ENCODE measurements at regions of chrX and their contacts with region 1.

Region 1: DNA sequence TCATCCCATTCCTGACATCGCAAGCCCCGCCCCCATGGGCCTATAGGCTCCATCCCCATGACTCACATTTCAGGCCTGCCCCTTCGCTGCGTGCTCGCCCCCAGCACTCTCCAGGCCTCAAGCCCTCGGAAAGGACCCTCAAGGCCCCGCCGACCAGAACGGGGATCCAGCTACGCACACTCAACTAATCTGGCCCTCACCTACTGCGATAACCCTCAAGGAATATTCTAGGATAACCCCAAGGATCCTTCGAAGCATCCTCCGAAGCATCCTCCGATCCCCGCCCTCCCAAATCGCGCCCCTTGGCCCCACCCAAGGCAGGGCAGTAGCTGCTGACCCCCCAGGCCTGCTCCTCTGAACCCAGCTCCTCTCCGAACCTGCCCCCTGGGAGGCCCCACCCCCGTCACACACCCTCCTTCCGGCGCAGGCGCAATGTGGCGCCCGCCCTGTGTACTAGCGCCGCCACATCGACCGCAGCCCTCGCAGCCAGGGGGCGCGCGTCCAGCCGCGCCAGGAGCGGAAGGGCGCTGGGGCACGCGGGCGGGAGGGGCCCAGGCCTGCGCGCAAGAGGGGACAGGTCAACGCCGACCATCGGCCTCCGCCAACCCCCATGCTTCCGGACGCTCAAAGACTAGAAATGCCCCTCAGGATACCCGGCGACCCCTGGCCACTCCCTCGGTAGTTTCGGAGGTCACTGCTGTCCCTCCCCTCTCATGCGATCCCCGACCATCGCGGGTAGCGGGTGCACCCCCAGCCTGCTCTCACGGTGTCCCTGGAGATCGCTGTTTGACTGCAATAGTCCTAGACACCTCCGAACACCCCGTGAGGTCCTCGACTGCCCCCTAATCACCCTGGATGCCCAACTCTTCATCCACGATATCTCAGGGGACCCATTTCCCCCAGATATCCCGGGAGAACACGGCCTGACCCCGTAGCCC is 6.4 kb upstream of the MAGIX start:
- DNase-seq: peak; percentile 89
- ATAC-seq: peak; percentile 95
- H3K4me3 Mint-ChIP-seq: peak overlapping the region; percentile 89
- H3K27ac Mint-ChIP-seq: peak overlapping the region; percentile 94
- H3K4me1 Mint-ChIP-seq: peaks cover 19% of the 10 kb centered on the region
- H3K27me3 Mint-ChIP-seq: no peaks in the 10 kb centered on the region

Region 2: DNA sequence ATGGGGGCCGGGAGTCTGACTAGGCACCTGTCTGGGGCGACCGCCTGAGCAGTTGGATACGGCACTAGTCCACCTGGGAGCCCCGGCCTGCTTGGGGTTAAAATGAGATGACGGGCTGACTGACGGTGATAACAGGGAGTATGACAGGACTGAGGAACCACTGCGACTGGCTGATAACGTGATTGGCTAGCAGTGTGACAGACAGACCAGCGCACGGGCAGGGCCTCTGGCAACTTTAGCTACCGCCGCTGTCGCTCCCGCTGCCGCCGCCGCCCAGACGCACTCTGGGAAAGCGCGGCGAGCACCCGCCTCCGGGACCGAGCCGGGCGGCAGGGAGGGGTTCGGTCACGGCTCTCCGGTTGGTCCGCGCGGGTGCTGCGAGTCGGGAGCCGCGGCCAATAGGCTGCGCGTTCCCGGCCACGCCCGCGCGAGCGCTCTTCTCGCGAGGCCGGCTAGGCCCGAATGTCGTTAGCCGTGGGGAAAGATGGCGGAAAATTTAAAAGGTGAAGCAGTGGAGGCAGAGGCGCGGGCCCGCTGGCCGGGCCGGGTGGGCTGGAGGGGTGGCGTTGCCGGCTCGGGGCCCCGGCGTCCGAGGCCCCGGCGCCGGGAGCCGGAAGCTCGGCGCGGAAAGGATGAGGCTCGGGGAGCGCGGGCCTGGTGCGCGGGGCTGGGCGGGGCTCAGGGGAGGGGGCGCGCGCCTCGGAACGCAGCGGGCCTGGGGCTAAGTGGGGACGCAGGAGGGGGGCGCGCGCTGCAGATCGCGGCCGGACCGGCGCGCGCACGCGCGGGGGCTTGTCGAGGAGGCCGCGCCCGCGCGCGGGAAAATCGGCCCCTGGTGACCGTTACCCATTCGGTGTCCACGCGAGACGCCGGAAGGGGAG is 459.6 kb before region 1 on chrX and contains the start of gene SUV39H1:
- CTCF ChIA-PET with region 1: no interaction called
- POLR2A ChIA-PET with region 1: no interaction called
- DNase-seq: peak; percentile 89
- ATAC-seq: peak; percentile 96
- H3K4me3 Mint-ChIP-seq: peak within 1 kb of the TSS; percentile 83
- H3K27ac Mint-ChIP-seq: peak within 1 kb of the TSS; percentile 97
- H3K4me1 Mint-ChIP-seq: peaks cover 45% of the 10 kb centered on the region
- H3K27me3 Mint-ChIP-seq: no peaks in the 10 kb centered on the region
- total RNA-seq, gene SUV39H1: 33.2 to 35.3 TPM

Region 3: DNA sequence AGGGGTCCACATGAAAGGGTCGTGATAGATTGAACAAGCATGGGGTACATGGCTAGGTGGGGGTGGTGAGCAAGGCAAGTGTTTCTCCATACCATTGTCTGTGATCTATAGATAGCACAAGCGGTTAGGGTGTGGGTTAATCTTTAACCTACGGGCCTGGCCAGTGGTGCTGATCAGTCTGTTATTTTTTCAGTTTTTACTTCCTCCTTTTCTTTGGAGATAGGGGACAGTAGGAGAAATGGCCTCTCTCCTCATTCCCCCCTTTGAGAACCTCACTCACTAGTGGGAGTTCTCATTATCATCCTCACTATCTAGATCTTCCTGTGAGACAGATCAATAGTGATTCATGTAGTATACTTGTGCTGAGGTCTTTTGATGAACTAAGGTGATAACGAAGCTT is 16.5 kb before region 1 on chrX:
- CTCF ChIA-PET with region 1: interaction called, 26 read pairs
- POLR2A ChIA-PET with region 1: no interaction called
- DNase-seq: no peak
- ATAC-seq: no peak
- H3K4me3 Mint-ChIP-seq: no peak overlapping the region
- H3K27ac Mint-ChIP-seq: no peak overlapping the region
- H3K4me1 Mint-ChIP-seq: no peaks in the 10 kb centered on the region
- H3K27me3 Mint-ChIP-seq: no peaks in the 10 kb centered on the region

Region 4: GRCh38 chrX:49165901-49166881 is 10.0 kb after region 1 on chrX:
- CTCF ChIA-PET with region 1: interaction called, 16 read pairs
- POLR2A ChIA-PET with region 1: interaction called, 5 read pairs
- DNase-seq: peak; percentile 85
- ATAC-seq: peak; percentile 58
- H3K4me3 Mint-ChIP-seq: peak overlapping the region; percentile 77
- H3K27ac Mint-ChIP-seq: peak overlapping the region; percentile 98
- H3K4me1 Mint-ChIP-seq: peaks cover 45% of the 10 kb centered on the region
- H3K27me3 Mint-ChIP-seq: no peaks in the 10 kb centered on the region

Region 5: GRCh38 chrX:49291615-49292337 is 135.6 kb after region 1 on chrX:
- CTCF ChIA-PET with region 1: no interaction called
- POLR2A ChIA-PET with region 1: no interaction called
- DNase-seq: peak; percentile 80
- ATAC-seq: peak; percentile 91
- H3K4me3 Mint-ChIP-seq: no peak overlapping the region
- H3K27ac Mint-ChIP-seq: peak overlapping the region; percentile 48
- H3K4me1 Mint-ChIP-seq: peaks cover 37% of the 10 kb centered on the region
- H3K27me3 Mint-ChIP-seq: peaks cover 8% of the 10 kb centered on the region

Region 6: DNA sequence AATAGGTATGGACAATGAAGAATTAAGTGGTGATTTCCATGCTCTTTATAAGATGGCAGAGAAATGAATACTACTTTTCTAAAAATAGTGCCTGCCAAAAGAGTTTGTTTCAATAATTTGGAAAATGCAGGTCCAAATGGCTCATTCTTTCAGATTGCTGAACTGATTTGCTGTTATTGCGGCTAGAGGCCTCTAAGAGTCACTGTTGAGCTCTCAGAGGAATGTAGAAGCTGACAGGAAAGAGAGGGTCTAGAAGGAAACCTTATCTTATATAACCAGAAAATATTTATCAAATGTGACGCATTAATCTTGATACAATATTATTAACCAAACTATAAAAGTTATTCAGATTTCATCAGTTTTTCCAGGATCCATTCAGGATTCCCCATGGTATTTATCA is 605.3 kb after region 1 on chrX:
- CTCF ChIA-PET with region 1: no interaction called
- POLR2A ChIA-PET with region 1: no interaction called
- DNase-seq: peak; percentile 22
- ATAC-seq: no peak
- H3K4me3 Mint-ChIP-seq: no peak overlapping the region
- H3K27ac Mint-ChIP-seq: no peak overlapping the region
- H3K4me1 Mint-ChIP-seq: no peaks in the 10 kb centered on the region
- H3K27me3 Mint-ChIP-seq: peaks cover 7% of the 10 kb centered on the region